ENCODE measurements at regions of chr11 and their contacts with region 1.

Region 1: DNA sequence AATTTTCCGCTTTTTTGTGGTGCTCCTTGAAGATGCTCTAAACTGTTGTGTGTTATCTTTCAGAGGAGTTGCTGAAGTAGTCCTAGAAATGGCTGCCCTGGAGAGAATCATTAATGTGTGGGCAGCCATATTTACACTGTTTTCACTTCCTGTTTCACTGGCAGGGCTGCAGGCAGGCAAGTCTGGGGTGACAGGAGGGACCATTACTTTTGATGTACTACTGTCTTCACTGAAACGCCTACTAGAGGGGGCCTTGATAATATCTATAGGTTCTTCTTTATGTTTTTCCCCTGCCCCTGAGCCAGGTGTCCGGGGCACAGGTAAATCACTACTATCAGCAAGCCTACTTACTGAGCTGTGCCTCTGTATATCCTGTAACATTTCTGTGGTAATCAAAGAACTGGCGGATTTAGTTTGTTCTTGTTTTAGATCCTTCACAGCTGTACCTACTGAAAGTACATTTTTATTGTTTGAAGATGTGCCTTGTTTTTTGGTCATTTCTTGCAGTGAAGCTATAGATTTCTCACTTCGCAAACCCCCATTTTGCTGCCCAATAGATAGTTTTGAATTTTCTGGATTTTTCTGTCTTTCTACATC is 39.7 kb downstream of the ACAT1 start:
- DNase-seq: peak; percentile 76
- ATAC-seq: peak; percentile 99
- H3K4me3 ChIP-seq: no peak overlapping the region
- H3K4me3 Mint-ChIP-seq: peak overlapping the region; percentile 24
- H3K27ac ChIP-seq: peak overlapping the region; percentile 46 to 59
- H3K27ac Mint-ChIP-seq: peak overlapping the region; percentile 88
- H3K4me1 ChIP-seq: peaks cover 13 to 14% of the 10 kb centered on the region in 2 donors
- H3K4me1 Mint-ChIP-seq: peaks cover 12% of the 10 kb centered on the region
- H3K27me3 ChIP-seq: no peaks in the 10 kb centered on the region
- H3K27me3 Mint-ChIP-seq: no peaks in the 10 kb centered on the region
- CTCF ChIP-seq: no peak

Region 2: GRCh38 chr11:107957109-107957588 is 203.9 kb before region 1 on chr11:
- CTCF ChIA-PET with region 1: no interaction called
- POLR2A ChIA-PET with region 1: no interaction called
- intact Hi-C with region 1: no loop called
- DNase-seq: no peak
- ATAC-seq: no peak
- H3K4me3 ChIP-seq: no peak overlapping the region
- H3K4me3 Mint-ChIP-seq: no peak overlapping the region
- H3K27ac ChIP-seq: no peak overlapping the region
- H3K27ac Mint-ChIP-seq: no peak overlapping the region
- H3K4me1 ChIP-seq: no peaks in the 10 kb centered on the region
- H3K4me1 Mint-ChIP-seq: peaks cover 2% of the 10 kb centered on the region
- H3K27me3 ChIP-seq: no peaks in the 10 kb centered on the region
- H3K27me3 Mint-ChIP-seq: no peaks in the 10 kb centered on the region
- CTCF ChIP-seq: no peak

Region 3: GRCh38 chr11:107988397-107989158 is 172.5 kb before region 1 on chr11:
- CTCF ChIA-PET with region 1: no interaction called
- POLR2A ChIA-PET with region 1: no interaction called
- intact Hi-C with region 1: no loop called
- DNase-seq: no peak
- ATAC-seq: no peak
- H3K4me3 ChIP-seq: no peak overlapping the region
- H3K4me3 Mint-ChIP-seq: no peak overlapping the region
- H3K27ac ChIP-seq: no peak overlapping the region
- H3K27ac Mint-ChIP-seq: no peak overlapping the region
- H3K4me1 ChIP-seq: no peaks in the 10 kb centered on the region
- H3K4me1 Mint-ChIP-seq: no peaks in the 10 kb centered on the region
- H3K27me3 ChIP-seq: no peaks in the 10 kb centered on the region
- H3K27me3 Mint-ChIP-seq: peaks cover 16% of the 10 kb centered on the region
- CTCF ChIP-seq: no peak

Region 4: DNA sequence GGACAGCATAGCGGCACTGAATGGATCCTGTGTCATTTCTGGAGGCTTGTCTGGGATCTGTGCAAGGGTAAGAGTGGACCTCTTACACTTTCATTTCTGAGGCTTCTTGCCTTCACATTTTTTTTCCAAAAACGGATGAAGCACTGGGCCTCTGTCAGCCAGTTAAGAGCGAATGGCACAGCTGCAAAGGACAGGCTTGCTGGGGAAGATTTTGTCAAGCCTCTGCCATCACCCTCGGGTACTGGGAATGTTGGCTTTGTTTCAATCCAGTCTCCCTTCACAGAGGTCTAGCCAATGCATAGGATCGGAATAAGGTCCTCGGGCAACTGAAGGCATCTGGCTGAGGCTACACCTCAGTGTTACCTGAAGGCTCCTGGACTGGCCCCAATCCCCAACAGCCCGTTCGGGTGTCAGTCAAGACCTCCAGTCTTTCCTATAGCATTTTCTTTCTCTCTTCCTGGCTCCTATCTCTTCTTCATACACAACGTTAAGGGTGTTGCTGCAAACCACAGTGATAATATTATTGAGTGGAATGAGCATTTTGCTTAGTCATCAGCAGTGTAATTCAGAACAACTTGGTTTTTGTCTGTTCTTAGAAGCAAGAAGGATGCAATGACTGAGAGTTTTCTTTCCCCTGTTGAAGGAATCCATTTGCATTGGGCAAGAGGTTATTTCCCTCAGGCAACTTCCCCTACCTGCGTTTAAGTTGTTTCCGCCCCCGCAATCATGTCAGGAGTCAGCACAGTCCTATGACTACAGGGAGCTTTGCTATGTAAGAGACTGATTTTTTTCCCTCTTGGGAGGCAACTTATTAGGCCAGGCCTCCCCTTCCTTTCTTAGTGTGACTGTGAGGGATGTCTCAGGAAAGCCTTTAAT is 38.6 kb after region 1 on chr11:
- CTCF ChIA-PET with region 1: no interaction called
- POLR2A ChIA-PET with region 1: no interaction called
- intact Hi-C with region 1: loop called (anchors 5 kb)
- DNase-seq: peak; percentile 78
- ATAC-seq: peak; percentile 82
- H3K4me3 ChIP-seq: no peak overlapping the region
- H3K4me3 Mint-ChIP-seq: peak overlapping the region; percentile 4
- H3K27ac ChIP-seq: peak overlapping the region; percentile 19 to 67
- H3K27ac Mint-ChIP-seq: peak overlapping the region; percentile 64
- H3K4me1 ChIP-seq: peaks cover 14 to 19% of the 10 kb centered on the region in 2 donors
- H3K4me1 Mint-ChIP-seq: peaks cover 54% of the 10 kb centered on the region
- H3K27me3 ChIP-seq: no peaks in the 10 kb centered on the region
- H3K27me3 Mint-ChIP-seq: no peaks in the 10 kb centered on the region
- CTCF ChIP-seq: no peak

Region 5: DNA sequence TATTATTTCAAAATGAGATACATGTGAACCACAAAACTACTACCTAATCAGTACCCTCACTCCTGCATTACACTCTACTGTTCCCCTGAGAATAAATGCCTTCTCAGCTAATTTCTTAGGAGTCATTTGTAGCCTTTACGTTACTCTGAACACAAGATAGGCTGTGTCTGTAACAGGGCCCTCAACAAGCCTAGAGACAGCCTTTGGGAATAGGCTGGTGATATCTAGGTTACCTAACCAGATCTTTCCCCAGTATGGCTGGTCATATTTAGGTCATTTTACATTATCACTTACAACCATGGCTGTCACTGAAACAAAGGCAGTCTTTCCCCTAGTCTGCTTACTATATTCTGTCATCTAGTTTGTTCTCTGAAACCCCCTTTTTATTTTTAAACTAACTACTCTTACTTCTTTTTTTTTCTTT is 76.0 kb after region 1 on chr11:
- CTCF ChIA-PET with region 1: no interaction called
- POLR2A ChIA-PET with region 1: no interaction called
- intact Hi-C with region 1: loop called (anchors 5 kb)
- DNase-seq: peak; percentile 52
- ATAC-seq: peak; percentile 26
- H3K4me3 ChIP-seq: peak overlapping the region in 3 of 5 experiments; percentile 11 to 57 (median 33)
- H3K4me3 Mint-ChIP-seq: peak overlapping the region; percentile 72
- H3K27ac ChIP-seq: peak overlapping the region; percentile 83 to 90
- H3K27ac Mint-ChIP-seq: peak overlapping the region; percentile 86
- H3K4me1 ChIP-seq: peaks cover 27 to 45% of the 10 kb centered on the region in 2 donors
- H3K4me1 Mint-ChIP-seq: peaks cover 43% of the 10 kb centered on the region
- H3K27me3 ChIP-seq: no peaks in the 10 kb centered on the region
- H3K27me3 Mint-ChIP-seq: no peaks in the 10 kb centered on the region
- CTCF ChIP-seq: no peak

Region 6: GRCh38 chr11:108289699-108290098 is 128.6 kb after region 1 on chr11:
- CTCF ChIA-PET with region 1: no interaction called
- POLR2A ChIA-PET with region 1: no interaction called
- intact Hi-C with region 1: loop called (anchors 10 kb)
- DNase-seq: peak; percentile 37
- ATAC-seq: peak; percentile 93
- H3K4me3 ChIP-seq: no peak overlapping the region
- H3K4me3 Mint-ChIP-seq: peak overlapping the region; percentile 13
- H3K27ac ChIP-seq: peak overlapping the region in 1 of 2 donors; percentile 55
- H3K27ac Mint-ChIP-seq: peak overlapping the region; percentile 76
- H3K4me1 ChIP-seq: peaks cover 6 to 8% of the 10 kb centered on the region in 2 donors
- H3K4me1 Mint-ChIP-seq: peaks cover 10% of the 10 kb centered on the region
- H3K27me3 ChIP-seq: no peaks in the 10 kb centered on the region
- H3K27me3 Mint-ChIP-seq: no peaks in the 10 kb centered on the region
- CTCF ChIP-seq: no peak